Caco-2 (cell line): ENCODE measurements at regions of chr11 and their contacts with region 1.

Region 1: DNA sequence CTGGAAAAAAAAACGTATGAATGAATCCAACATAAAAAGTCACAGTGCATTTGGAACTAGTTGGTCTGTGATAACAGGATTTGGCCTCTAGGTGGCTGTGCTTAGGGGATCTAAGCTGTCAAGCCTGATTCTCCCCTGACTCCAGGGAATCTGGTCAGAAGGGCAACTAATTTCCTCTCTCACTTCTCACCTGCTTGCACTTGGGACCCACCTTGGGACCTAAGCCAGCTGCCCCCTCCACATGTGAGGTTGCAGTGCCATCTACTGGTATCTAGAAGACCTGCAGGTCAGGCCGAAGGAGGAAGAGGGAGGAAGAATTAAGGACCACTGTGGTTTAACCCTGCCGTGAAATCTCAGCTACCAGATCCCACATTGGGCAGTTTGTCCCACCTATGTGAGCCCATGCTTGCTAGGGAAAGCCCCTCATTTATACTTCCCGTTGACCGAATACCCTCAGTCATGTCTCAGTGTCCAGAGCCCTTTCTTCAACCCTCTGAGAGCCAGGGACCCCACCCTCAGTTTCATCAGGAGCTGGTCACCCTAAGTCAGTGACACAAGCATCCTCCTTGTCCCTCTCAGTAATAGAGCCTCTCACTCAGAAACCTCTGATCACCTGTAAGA is 33.2 kb upstream of the CAVIN3 start:
- DNase-seq: peak; percentile 91 to 92
- H3K4me3 ChIP-seq: no peak overlapping the region
- H3K4me3 Mint-ChIP-seq: no peak overlapping the region
- H3K27ac Mint-ChIP-seq: no peak overlapping the region
- H3K4me1 ChIP-seq: peaks cover 10% of the 10 kb centered on the region
- H3K4me1 Mint-ChIP-seq: peaks cover 24% of the 10 kb centered on the region
- H3K27me3 ChIP-seq: no peaks in the 10 kb centered on the region
- H3K27me3 Mint-ChIP-seq: no peaks in the 10 kb centered on the region
- CTCF ChIP-seq: peak; percentile 87 to 96

Region 2: GRCh38 chr11:6022956-6023355 is 330.5 kb before region 1 on chr11:
- CTCF ChIA-PET with region 1: interaction called, 7 read pairs
- POLR2A ChIA-PET with region 1: no interaction called
- intact Hi-C with region 1: loop called (anchors 1 kb)
- DNase-seq: peak in 1 of 2 experiments; percentile 34
- H3K4me3 ChIP-seq: no peak overlapping the region
- H3K4me3 Mint-ChIP-seq: no peak overlapping the region
- H3K27ac Mint-ChIP-seq: no peak overlapping the region
- H3K4me1 ChIP-seq: no peaks in the 10 kb centered on the region
- H3K4me1 Mint-ChIP-seq: no peaks in the 10 kb centered on the region
- H3K27me3 ChIP-seq: no peaks in the 10 kb centered on the region
- H3K27me3 Mint-ChIP-seq: peaks cover 14% of the 10 kb centered on the region
- CTCF ChIP-seq: peak; percentile 51 to 52

Region 3: GRCh38 chr11:6210274-6210955 is 143.1 kb before region 1 on chr11:
- CTCF ChIA-PET with region 1: no interaction called
- POLR2A ChIA-PET with region 1: no interaction called
- intact Hi-C with region 1: no loop called
- DNase-seq: no peak
- H3K4me3 ChIP-seq: no peak overlapping the region
- H3K4me3 Mint-ChIP-seq: no peak overlapping the region
- H3K27ac Mint-ChIP-seq: no peak overlapping the region
- H3K4me1 ChIP-seq: no peaks in the 10 kb centered on the region
- H3K4me1 Mint-ChIP-seq: peaks cover 5% of the 10 kb centered on the region
- H3K27me3 ChIP-seq: no peaks in the 10 kb centered on the region
- H3K27me3 Mint-ChIP-seq: no peaks in the 10 kb centered on the region
- CTCF ChIP-seq: no peak

Region 4: GRCh38 chr11:6251120-6251733 is 102.2 kb before region 1 on chr11:
- CTCF ChIA-PET with region 1: interaction called, 35 read pairs
- POLR2A ChIA-PET with region 1: no interaction called
- intact Hi-C with region 1: loop called (anchors 1 kb)
- DNase-seq: peak; percentile 81 to 83
- H3K4me3 ChIP-seq: no peak overlapping the region
- H3K4me3 Mint-ChIP-seq: no peak overlapping the region
- H3K27ac Mint-ChIP-seq: no peak overlapping the region
- H3K4me1 ChIP-seq: peaks cover 15% of the 10 kb centered on the region
- H3K4me1 Mint-ChIP-seq: peaks cover 17% of the 10 kb centered on the region
- H3K27me3 ChIP-seq: no peaks in the 10 kb centered on the region
- H3K27me3 Mint-ChIP-seq: no peaks in the 10 kb centered on the region
- CTCF ChIP-seq: peak; percentile 69 to 91

Region 5: GRCh38 chr11:6315811-6316425 is 37.6 kb before region 1 on chr11:
- CTCF ChIA-PET with region 1: interaction called, 14 read pairs
- POLR2A ChIA-PET with region 1: no interaction called
- intact Hi-C with region 1: loop called (anchors 1 kb)
- DNase-seq: peak; percentile 61 to 68
- H3K4me3 ChIP-seq: no peak overlapping the region
- H3K4me3 Mint-ChIP-seq: no peak overlapping the region
- H3K27ac Mint-ChIP-seq: no peak overlapping the region
- H3K4me1 ChIP-seq: 0 out of 2 replicates have a peak, but pooled peaks cover 6% of the 10 kb centered on the region
- H3K4me1 Mint-ChIP-seq: peaks cover 9% of the 10 kb centered on the region
- H3K27me3 ChIP-seq: no peaks in the 10 kb centered on the region
- H3K27me3 Mint-ChIP-seq: peaks cover 4% of the 10 kb centered on the region
- CTCF ChIP-seq: peak; percentile 86 to 96

Region 6: GRCh38 chr11:6427516-6427915 is 74.0 kb after region 1 on chr11:
- CTCF ChIA-PET with region 1: no interaction called
- POLR2A ChIA-PET with region 1: no interaction called
- intact Hi-C with region 1: no loop called
- DNase-seq: peak in 1 of 2 experiments; percentile 39
- H3K4me3 ChIP-seq: no peak overlapping the region
- H3K4me3 Mint-ChIP-seq: no peak overlapping the region
- H3K27ac Mint-ChIP-seq: peak overlapping the region; percentile 17
- H3K4me1 ChIP-seq: peaks cover 9% of the 10 kb centered on the region
- H3K4me1 Mint-ChIP-seq: peaks cover 16% of the 10 kb centered on the region
- H3K27me3 ChIP-seq: no peaks in the 10 kb centered on the region
- H3K27me3 Mint-ChIP-seq: peaks cover 2% of the 10 kb centered on the region
- CTCF ChIP-seq: no peak